ENCODE measurements at regions of chr1 and their contacts with region 1.

Region 1: GRCh38 chr1:27392096-27392777 is at the start of gene GPR3:
- ATAC-seq: peak; percentile 80 to 85 (median 82)
- H3K4me3 ChIP-seq: peak within 1 kb of the TSS; percentile 56 to 74 (median 68)
- H3K27ac ChIP-seq: peak within 1 kb of the TSS in 1 of 2 donors; percentile 43
- H3K4me1 ChIP-seq: peaks cover 7 to 14% of the 10 kb centered on the region in 2 donors
- total RNA-seq, gene GPR3: 0.56 to 4.0 (median 2.5) TPM

Region 2: GRCh38 chr1:27111626-27112573 is 280.3 kb before region 1 on chr1:
- in situ Hi-C with region 1: loop called in 1 of 9 experiments (anchors 25 kb)
- ATAC-seq: peak; percentile 87 to 97 (median 94)
- H3K4me3 ChIP-seq: no peak overlapping the region
- H3K27ac ChIP-seq: no peak overlapping the region
- H3K4me1 ChIP-seq: no peaks in the 10 kb centered on the region

Region 3: DNA sequence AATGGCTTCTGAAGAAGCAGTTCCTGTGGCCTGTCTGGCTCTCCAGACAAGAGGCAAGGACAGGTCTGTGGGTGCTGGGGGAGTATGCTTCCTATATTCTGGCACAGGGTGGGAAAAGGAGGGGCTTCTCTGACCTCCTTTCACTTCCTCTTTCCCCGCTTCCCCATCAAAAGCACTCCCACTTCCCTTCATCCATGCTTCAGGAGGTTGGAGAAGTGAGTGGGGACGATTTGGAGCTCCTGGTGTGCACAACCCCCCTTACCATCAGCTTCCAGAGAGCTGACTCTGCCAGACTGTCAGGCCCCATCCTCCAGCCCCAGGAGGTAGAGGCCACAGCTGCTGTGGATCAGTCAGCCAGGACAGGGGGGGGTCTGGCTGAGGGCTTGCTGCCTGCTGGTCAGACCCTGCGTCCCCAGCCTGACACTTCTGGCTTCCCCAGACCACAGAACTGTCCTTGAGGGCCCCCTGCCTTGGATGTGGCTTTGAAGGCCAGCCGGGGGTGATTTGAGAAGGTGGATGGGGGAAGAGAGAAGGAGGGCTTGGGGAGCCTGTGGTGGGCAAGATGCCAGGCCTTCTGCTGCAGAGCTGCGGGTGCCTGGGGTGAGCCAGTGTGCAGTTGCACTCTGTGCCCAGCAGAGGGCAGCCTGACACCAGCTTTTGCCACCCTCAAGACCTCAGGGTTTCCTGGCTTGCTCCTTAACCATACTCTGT is 91.7 kb before region 1 on chr1:
- in situ Hi-C with region 1: loop called in 4 of 9 experiments (anchors 5 to 10 kb)
- ATAC-seq: peak; percentile 70 to 94 (median 78)
- H3K4me3 ChIP-seq: no peak overlapping the region
- H3K27ac ChIP-seq: peak overlapping the region; percentile 64 to 70
- H3K4me1 ChIP-seq: peaks cover 17 to 30% of the 10 kb centered on the region in 2 donors

Region 4: DNA sequence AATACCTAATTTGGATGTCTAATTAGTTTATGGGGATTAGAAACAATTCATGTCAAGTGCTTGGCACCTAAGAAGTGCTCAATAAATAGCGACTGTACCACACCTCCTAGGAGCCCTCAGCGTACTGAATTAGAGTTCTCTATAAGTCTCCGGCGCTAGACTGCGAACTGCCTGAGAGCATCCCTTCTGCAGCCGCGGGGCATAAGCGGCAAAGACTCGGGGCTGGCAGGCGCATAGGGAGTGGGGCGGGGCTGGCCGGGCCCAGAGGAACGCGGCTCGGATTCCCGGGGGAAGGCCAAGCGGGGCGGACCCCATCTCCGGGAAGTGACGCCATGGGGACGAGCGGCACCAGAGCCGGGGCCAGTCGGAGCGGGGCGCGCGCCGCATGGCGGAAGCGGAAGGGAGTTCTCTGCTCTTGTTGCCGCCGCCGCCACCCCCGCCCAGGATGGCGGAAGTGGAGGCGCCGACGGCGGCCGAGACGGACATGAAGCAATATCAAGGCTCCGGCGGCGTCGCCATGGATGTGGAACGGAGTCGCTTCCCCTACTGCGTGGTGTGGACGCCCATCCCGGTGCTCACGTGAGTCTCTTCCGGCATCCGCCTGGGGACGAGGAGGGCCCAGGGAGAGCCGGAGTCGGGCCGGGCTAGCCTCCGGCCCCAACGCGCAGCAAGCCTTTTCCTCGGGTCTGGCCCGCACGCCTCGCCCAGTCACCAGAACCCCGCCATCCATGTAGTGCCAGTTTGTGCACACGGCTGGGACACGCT is 70.2 kb before region 1 on chr1 and contains the start of gene TMEM222:
- in situ Hi-C with region 1: loop called in 1 of 9 experiments (anchors 10 kb)
- ATAC-seq: peak; percentile 91 to 97 (median 94)
- H3K4me3 ChIP-seq: peak within 1 kb of the TSS; percentile 66 to 97 (median 91)
- H3K27ac ChIP-seq: peak within 1 kb of the TSS; percentile 93 to 95
- H3K4me1 ChIP-seq: peaks cover 24 to 29% of the 10 kb centered on the region in 2 donors
- total RNA-seq, gene TMEM222: 27.0 to 57.4 (median 38.0) TPM